ENCODE measurements at regions of chr10 and their contacts with region 1.

Region 1: DNA sequence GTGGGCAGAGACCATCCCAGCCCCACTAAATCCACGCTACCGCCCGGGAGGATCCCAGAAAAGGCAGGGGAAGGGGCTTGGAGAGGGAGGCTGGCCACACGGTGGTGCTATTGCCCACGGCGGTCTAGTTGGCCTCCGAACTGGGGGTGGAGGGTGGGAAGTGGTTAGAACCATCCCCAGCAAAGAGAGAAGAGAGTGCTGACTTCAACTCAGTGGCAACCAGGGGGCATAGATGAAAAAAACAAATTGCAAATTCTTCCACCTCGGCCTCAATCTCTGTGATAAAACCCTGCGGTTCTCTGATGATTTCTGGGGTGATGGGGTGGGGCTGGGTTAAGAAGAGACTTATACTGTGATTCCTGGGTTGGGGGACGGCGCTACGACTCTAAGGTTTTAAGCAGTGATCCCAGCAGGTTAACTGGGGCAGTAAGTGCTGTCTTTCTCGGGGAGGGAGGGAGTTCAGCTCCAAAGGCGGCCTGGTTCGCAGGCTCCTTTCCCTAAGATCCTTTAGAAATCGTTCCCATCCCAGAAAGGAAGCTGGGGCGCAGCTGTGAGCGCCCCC is 154.5 kb upstream of the LYZL2 start:
- DNase-seq: peak in 1 of 2 donors; percentile 78
- H3K4me3 ChIP-seq: peak overlapping the region; percentile 64 to 77 (median 70)
- H3K27ac ChIP-seq: peak overlapping the region; percentile 84 to 88
- H3K4me1 ChIP-seq: peaks cover 0 to 6% of the 10 kb centered on the region in 2 donors
- H3K27me3 ChIP-seq: no peaks in the 10 kb centered on the region
- CTCF ChIP-seq: peak; percentile 15 to 79 (median 66)
- POLR2A ChIP-seq: no peak

Region 2: GRCh38 chr10:30803892-30804322 is 19.9 kb after region 1 on chr10:
- intact Hi-C with region 1: no loop called
- DNase-seq: peak in 1 of 2 donors; percentile 46
- H3K4me3 ChIP-seq: peak overlapping the region in 1 of 3 donors; percentile 53
- H3K27ac ChIP-seq: peak overlapping the region; percentile 68 to 89
- H3K4me1 ChIP-seq: peaks cover 0 to 4% of the 10 kb centered on the region in 2 donors
- H3K27me3 ChIP-seq: no peaks in the 10 kb centered on the region
- CTCF ChIP-seq: no peak
- POLR2A ChIP-seq: no peak

Region 3: DNA sequence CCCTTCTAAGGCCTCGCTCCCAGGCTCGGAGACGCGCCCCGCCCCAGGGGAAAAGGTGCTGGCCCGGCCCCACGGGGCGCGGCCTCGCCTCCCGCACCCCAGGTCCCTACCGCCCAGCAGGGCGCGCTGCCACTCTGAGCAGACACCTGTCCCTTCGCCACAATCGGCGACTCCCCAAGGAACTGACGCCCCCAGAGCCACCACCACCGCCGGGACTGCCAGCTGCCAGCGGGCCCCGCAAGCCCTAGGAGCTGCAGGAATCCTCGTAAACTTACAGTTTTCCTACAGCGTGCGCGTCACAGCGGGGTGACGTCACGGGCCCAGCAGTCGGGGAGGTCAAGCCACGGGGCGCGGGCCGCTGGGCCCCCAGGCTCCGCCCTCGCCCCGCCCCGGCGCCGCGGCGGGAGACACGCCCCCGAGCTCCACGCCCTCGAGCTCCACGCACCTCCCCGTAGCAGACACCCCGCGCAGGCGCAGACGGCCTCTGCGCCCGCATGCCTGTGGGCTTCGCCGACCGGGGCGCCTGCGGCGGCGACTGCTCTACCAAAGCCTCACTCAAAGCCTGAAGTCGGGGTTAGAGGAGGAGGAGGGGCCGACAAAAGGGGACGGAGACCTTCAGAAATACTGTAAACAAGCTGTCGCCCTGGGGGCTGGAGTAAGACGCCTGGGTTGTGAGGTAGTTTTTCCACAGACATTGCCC is 247.7 kb after region 1 on chr10 and contains the start of gene ZNF438:
- intact Hi-C with region 1: loop called (anchors 5 kb)
- DNase-seq: peak; percentile 91 to 92
- H3K4me3 ChIP-seq: peak within 1 kb of the TSS; percentile 43 to 80 (median 74)
- H3K27ac ChIP-seq: peak within 1 kb of the TSS; percentile 99 to 100
- H3K4me1 ChIP-seq: no peaks in the 10 kb centered on the region
- H3K27me3 ChIP-seq: no peaks in the 10 kb centered on the region
- CTCF ChIP-seq: peak; percentile 40 to 78 (median 72)
- POLR2A ChIP-seq: peak; percentile 81
- total RNA-seq, gene ZNF438: 8.8 to 34.6 (median 10.0) TPM

Region 4: GRCh38 chr10:31808258-31809218 is 1024.5 kb after region 1 on chr10:
- intact Hi-C with region 1: loop called (anchors 5 kb)
- DNase-seq: no peak
- H3K4me3 ChIP-seq: peak overlapping the region; percentile 28 to 60 (median 35)
- H3K27ac ChIP-seq: peak overlapping the region; percentile 68 to 79
- H3K4me1 ChIP-seq: no peaks in the 10 kb centered on the region
- H3K27me3 ChIP-seq: no peaks in the 10 kb centered on the region
- CTCF ChIP-seq: peak; percentile 39 to 70 (median 56)
- POLR2A ChIP-seq: no peak

Measured in breast epithelium (tissue), 4 donors.